A549 (cell line): ENCODE measurements at regions of chr19 and their contacts with region 1.

Region 1: DNA sequence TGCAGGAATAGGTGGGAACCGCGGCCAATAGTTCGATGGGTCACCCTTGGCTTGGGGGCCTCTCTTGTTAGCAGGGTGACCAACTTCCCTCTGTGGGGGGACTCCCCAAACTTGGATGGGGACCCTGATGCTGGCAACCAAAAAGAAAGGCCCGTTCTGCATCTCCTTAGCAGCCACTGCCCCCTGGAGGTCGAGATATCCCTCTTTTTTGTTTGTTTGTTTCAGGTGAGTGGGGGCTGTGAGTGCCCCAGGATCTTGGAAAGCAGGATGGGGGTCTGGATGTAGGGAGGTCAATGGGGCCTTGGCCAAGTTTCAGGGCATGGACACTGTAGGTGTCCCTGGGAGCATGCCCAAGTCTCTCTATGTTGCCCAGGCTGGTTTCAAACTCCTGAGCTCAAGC is 7.7 kb upstream of the CRTC1 start:
- DNase-seq: no peak
- ATAC-seq: no peak
- H3K4me3 ChIP-seq: no peak overlapping the region
- H3K27ac ChIP-seq: peak overlapping the region in 1 of 2 experiments; percentile 98; a peak in 4 of 6 replicates
- H3K4me1 ChIP-seq: peaks cover 20% of the 10 kb centered on the region
- CTCF ChIP-seq: peak; percentile 11; the same call in 1 of the 3 replicates
- EP300 ChIP-seq: no peak
- POLR2A ChIP-seq: no peak
- RAD21 ChIP-seq: peak; percentile 29 to 53; a peak in 4 of 5 replicates

Region 2: GRCh38 chr19:18594096-18594823 is 81.5 kb before region 1 on chr19:
- CTCF ChIA-PET with region 1: interaction called, 19 read pairs
- POLR2A ChIA-PET with region 1: interaction called, 3 read pairs
- DNase-seq: peak; percentile 44 to 57
- ATAC-seq: peak; percentile 25 to 52; a peak in 5 of 6 replicates
- H3K4me3 ChIP-seq: peak overlapping the region; percentile 29; the same call in 2 of the 3 replicates
- H3K27ac ChIP-seq: peak overlapping the region; percentile 66 to 84
- H3K4me1 ChIP-seq: peaks cover 9% of the 10 kb centered on the region; the same call in 1 of the 3 replicates
- CTCF ChIP-seq: peak; percentile 70
- EP300 ChIP-seq: no peak
- POLR2A ChIP-seq: no peak
- RAD21 ChIP-seq: peak; percentile 56 to 67

Region 3: DNA sequence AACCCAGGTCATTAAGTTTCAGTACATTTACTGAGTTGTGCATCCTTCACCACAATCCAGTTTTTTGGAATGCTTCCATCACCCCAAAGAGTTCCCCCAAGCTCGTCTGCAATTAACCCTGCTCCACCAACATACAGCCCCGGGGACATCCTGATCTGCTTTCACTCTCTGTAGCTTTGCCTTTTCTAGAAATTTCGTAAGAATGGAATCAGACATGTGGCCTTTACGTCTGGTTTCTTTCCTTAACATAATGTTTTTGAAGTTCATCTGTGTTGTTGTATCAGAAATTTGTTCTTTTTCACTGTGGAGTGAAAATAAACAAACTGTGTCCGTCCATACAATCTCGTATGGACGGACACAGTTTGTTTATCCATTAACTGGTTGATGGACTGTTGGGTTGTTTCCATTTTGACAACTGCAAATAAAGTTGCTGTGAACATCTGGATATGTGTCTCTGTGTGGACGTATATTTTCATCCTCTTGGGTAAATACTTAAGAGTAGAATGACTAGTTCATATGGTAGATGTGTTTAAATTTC is 36.0 kb before region 1 on chr19:
- CTCF ChIA-PET with region 1: interaction called, 12 read pairs
- POLR2A ChIA-PET with region 1: interaction called, 3 read pairs
- DNase-seq: no peak
- ATAC-seq: no peak
- H3K4me3 ChIP-seq: no peak overlapping the region
- H3K27ac ChIP-seq: no peak overlapping the region
- H3K4me1 ChIP-seq: peaks cover 10% of the 10 kb centered on the region; the same call in 1 of the 3 replicates
- CTCF ChIP-seq: no peak
- EP300 ChIP-seq: no peak
- POLR2A ChIP-seq: no peak
- RAD21 ChIP-seq: no peak